ENCODE measurements at regions of chr2 and their contacts with region 1.

Region 1: DNA sequence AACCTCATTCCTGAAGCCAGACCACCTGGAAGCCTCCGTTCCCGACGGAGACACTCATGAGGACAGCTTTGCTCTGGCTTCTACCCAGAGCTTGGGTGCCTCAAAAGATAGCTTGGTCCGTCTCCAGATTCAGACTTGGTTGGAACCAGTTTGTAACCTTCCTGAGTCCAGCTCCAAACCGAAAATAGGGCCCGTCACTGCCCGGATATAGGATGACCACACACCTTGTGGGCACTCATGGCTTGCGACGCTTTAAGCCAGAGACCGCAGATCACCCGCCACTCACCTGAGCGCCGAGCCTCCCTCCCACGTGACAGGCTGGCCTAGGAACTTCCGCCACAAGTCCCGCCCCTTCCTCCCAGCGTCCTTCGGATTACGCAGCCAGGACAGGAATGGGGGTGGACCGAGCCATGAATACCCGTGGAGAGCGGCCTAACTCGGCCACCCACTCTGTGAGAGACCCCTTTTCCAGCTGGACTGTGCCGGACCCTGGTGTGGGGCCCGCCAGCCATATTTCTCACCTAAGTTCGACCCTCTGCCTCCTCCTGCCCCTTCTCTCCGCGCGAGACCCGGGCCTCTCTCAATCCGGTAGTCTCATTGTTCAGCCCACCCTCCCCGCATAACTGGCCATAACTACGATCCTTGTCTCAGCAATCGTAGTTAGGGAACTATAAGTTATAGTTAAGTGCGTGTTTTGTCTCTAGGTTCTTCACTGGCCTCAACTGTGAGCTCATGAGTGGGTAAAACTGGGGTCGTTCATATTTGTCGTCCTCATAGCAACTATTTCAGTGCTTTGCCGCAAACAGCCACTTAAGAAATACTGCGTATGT is at the start of gene MPV17:
- DNase-seq: peak; percentile 85
- ATAC-seq: peak; percentile 90
- H3K4me3 Mint-ChIP-seq: peak within 1 kb of the TSS; percentile 97
- H3K27ac Mint-ChIP-seq: peak within 1 kb of the TSS; percentile 95
- H3K4me1 Mint-ChIP-seq: peaks cover 13% of the 10 kb centered on the region
- H3K27me3 Mint-ChIP-seq: no peaks in the 10 kb centered on the region
- total RNA-seq, gene MPV17: 93.4 to 100 TPM

Region 2: DNA sequence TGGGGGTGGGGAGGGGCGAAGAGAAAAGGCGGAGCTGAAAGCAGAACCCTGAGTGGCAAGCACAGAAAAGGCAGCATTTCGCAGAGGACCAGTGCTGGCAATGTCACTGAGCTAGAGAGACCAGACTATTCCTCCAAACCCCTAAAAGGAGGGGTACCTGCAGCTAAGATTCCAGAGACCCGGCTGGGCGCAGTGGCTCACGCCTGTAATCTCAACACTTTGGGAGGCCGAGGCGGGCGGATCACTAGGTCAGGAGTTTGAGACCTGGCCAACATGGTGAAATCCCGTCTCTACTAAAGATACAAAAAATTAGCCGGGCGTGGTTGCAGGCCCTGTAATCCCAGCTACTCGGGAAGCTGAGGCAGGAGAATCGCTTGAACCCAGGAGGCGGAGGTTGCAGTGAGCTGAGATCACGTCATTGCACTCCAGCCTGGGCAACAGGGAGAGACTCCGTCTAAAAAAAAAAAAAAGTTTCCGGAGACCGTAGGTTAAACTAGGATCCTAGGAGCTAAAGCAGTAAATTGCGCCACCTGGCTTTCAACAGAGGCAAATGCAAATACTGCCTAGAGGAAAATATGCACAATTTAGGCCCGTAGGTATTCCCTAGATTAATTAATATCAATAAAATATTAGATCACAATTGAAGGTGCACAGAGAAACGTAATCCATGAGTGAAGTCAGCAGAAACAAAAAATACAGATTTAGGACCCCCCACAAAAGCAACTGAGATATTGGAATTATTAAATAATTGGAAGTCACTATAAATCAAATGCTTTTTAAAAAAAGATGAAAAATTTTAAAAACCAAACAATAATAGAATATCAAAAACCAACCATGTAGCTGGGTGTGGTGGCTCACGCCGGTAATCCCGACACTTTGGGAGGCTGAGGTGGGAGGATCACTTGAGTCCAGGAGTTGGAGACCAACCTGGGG is 19.6 kb before region 1 on chr2:
- POLR2A ChIA-PET with region 1: no interaction called
- DNase-seq: peak; percentile 49
- ATAC-seq: peak; percentile 56
- H3K4me3 Mint-ChIP-seq: peak overlapping the region; percentile 73
- H3K27ac Mint-ChIP-seq: peak overlapping the region; percentile 54
- H3K4me1 Mint-ChIP-seq: peaks cover 7% of the 10 kb centered on the region
- H3K27me3 Mint-ChIP-seq: peaks cover 17% of the 10 kb centered on the region

Region 3: GRCh38 chr2:27356382-27357181 is 33.6 kb after region 1 on chr2 and contains the start of gene GTF3C2:
- POLR2A ChIA-PET with region 1: interaction called, 12 read pairs
- DNase-seq: peak; percentile 88
- ATAC-seq: peak; percentile 80
- H3K4me3 Mint-ChIP-seq: peak within 1 kb of the TSS; percentile 97
- H3K27ac Mint-ChIP-seq: peak within 1 kb of the TSS; percentile 99
- H3K4me1 Mint-ChIP-seq: peaks cover 34% of the 10 kb centered on the region
- H3K27me3 Mint-ChIP-seq: no peaks in the 10 kb centered on the region
- total RNA-seq, gene GTF3C2: 66.4 to 70.8 TPM